Transverse colon (tissue), 4 donors: ENCODE measurements at regions of chr19 and their contacts with region 1.

Region 1: DNA sequence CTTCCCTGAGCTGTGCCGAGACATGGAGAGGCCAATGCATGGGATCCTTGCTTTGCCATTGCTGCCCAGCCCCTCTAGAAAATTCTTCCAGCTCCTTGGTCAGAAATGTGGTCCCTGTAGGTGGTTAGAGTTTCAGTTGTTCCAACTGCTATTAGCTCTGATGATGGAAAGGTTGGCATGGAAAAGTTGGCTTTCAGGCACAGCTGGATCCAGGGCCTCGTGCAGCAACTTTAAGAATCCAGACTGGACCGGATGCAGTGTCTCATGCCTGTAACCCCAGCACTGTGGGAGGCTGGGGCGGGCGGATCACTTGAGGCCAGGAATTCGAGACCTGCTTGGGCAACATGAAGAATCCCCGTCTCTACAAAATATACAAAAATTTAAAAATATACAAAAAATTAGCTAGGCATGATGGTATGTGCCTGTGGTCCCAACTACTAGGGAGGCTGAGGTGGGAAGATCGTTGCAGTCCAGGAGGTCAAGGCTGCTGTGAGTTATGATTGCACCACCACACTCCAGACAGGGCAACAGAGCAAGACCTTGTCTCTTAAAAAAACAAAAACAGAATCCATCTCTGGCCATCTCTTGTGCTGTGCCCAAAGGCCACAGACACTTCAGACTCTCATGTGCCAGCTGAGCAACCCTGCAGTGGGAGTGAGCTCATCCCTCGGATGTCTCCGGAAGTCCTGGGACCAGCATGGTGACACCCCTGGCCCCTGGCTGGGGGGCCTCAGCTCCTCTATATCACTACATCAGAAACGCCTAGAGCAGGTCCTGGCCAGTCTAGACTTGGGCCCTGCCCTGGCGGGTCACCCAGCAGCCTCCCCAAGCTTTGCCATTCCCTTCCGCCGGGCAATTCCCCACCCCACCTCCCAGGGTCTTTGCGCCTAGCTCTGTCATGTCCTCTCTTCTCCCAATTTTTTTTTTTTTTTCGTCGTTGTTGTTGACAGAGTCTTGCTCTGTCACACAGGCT is 16.8 kb downstream of the MEX3D start:
- DNase-seq: no peak
- H3K4me3 ChIP-seq: no peak overlapping the region
- H3K27ac ChIP-seq: no peak overlapping the region
- H3K4me1 ChIP-seq: peaks cover 0 to 3% (median under 1%) of the 10 kb centered on the region in 4 donors
- H3K27me3 ChIP-seq: no peaks in the 10 kb centered on the region
- CTCF ChIP-seq: no peak
- EP300 ChIP-seq: no peak
- POLR2A ChIP-seq: no peak

Region 2: GRCh38 chr19:1672038-1672768 is 120.8 kb after region 1 on chr19:
- in situ Hi-C with region 1: loop called in 2 of 4 experiments (anchors 10 to 25 kb)
- intact Hi-C with region 1: loop called (anchors 2 kb)
- DNase-seq: peak; percentile 45
- H3K4me3 ChIP-seq: peak overlapping the region in 2 of 4 donors; percentile 16 to 21
- H3K27ac ChIP-seq: no peak overlapping the region
- H3K4me1 ChIP-seq: peaks cover 8 to 19% (median 12%) of the 10 kb centered on the region in 4 donors
- H3K27me3 ChIP-seq: peaks cover 97% of the 10 kb centered on the region
- CTCF ChIP-seq: peak; percentile 81 to 96 (median 88)
- EP300 ChIP-seq: no peak
- POLR2A ChIP-seq: no peak

Region 3: DNA sequence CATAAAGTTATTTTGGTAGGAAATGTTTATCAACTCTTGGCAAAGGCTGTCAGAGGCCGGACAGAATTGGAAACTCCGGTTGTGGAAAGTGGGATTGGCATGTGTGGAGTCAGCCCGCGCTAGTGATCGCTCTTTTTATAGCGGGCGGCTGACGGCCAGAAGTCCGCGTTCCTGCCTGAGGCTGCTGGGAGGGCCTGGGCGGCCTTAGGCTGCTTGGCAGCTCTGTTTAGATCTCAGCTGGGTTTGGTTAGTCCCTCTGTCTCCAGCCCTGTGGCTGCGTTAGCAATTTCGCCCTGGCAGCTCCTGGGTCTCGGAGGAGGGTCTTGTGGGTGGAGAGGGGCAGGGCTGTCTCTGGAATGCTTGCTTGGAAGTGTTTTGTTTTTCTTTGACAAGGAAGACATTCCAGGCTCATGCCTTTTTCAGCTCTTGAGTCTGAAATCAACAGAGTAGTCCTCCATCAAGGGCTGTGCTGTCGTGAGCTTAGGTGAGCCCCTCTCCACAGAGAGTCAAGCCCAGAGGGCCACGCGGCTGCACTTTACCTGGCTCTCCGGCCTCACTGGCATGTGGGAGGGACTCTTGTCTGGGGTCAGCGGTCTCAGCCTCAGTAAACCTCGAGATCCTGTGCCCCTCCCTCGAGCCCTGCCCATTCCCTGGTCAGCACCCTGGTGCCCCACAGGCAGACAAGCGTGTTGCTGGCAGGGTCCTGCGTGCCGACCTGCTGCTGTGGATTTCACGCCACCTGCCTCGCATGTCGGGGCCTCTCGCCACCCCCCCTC is 634.9 kb after region 1 on chr19:
- in situ Hi-C with region 1: no loop called
- intact Hi-C with region 1: no loop called
- DNase-seq: peak; percentile 69
- H3K4me3 ChIP-seq: peak overlapping the region in 1 of 4 donors; percentile 2
- H3K27ac ChIP-seq: peak overlapping the region; percentile 66 to 84 (median 78)
- H3K4me1 ChIP-seq: peaks cover 20 to 46% (median 28%) of the 10 kb centered on the region in 4 donors
- H3K27me3 ChIP-seq: no peaks in the 10 kb centered on the region
- CTCF ChIP-seq: no peak
- EP300 ChIP-seq: no peak
- POLR2A ChIP-seq: no peak